ENCODE measurements at regions of chr22 and their contacts with region 1.

Region 1: GRCh38 chr22:28424427-28425080 is 255.1 kb downstream of the TTC28 start:
- DNase-seq: no peak
- H3K4me3 ChIP-seq: no peak overlapping the region
- H3K27ac ChIP-seq: no peak overlapping the region
- H3K4me1 ChIP-seq: peaks cover 12% of the 10 kb centered on the region
- H3K27me3 ChIP-seq: no peaks in the 10 kb centered on the region
- CTCF ChIP-seq: no peak
- POLR2A ChIP-seq: no peak

Region 2: DNA sequence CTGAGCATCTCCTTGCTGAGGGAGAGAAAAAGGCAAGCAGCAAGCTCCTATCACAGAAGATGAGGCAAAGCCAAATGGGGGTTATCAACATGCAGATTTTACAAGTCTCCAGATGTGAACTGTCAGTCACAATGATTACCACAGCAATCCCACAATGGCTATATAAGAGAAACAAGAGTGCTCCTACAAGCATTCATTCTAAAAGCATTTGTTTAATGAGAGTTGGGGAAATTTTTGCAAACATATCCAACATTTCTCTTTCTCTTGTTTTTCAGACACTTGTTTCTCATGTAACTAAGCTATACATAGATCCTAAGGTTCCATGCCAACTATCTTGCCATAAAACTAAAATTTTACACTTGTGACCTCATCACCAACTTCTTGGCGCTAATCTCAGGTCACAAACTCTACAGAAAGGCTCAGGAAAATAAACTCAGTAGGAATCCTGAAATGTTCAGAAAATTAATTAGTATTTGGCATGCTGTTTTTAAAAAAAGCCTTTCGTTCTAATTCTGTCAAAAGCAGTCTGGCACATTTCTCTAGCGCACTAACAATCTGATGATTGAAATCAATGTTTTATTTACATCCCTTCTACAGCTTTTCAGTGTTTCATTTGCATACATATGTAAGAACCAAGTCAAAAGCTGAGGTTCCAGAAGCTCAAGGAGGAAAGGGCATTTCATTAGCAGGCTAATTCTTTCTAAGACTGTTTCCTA is 55.6 kb after region 1 on chr22:
- intact Hi-C with region 1: no loop called
- DNase-seq: no peak
- H3K4me3 ChIP-seq: no peak overlapping the region
- H3K27ac ChIP-seq: no peak overlapping the region
- H3K4me1 ChIP-seq: peaks cover 8% of the 10 kb centered on the region
- H3K27me3 ChIP-seq: no peaks in the 10 kb centered on the region
- CTCF ChIP-seq: no peak
- POLR2A ChIP-seq: no peak

Region 3: GRCh38 chr22:29369460-29369859 is 944.9 kb after region 1 on chr22:
- intact Hi-C with region 1: loop called (anchors 10 kb)
- DNase-seq: no peak
- H3K4me3 ChIP-seq: no peak overlapping the region
- H3K27ac ChIP-seq: peak overlapping the region; percentile 63
- H3K4me1 ChIP-seq: peaks cover 19% of the 10 kb centered on the region
- H3K27me3 ChIP-seq: no peaks in the 10 kb centered on the region
- CTCF ChIP-seq: no peak
- POLR2A ChIP-seq: no peak

Measured in vagina (tissue), 2 donors.